ENCODE measurements at regions of chr5 and their contacts with region 1.

Region 1: GRCh38 chr5:69007726-69008368 is 86.0 kb upstream of the SLC30A5 start:
- DNase-seq: peak; percentile 65
- CTCF ChIP-seq: peak; percentile 97

Region 2: DNA sequence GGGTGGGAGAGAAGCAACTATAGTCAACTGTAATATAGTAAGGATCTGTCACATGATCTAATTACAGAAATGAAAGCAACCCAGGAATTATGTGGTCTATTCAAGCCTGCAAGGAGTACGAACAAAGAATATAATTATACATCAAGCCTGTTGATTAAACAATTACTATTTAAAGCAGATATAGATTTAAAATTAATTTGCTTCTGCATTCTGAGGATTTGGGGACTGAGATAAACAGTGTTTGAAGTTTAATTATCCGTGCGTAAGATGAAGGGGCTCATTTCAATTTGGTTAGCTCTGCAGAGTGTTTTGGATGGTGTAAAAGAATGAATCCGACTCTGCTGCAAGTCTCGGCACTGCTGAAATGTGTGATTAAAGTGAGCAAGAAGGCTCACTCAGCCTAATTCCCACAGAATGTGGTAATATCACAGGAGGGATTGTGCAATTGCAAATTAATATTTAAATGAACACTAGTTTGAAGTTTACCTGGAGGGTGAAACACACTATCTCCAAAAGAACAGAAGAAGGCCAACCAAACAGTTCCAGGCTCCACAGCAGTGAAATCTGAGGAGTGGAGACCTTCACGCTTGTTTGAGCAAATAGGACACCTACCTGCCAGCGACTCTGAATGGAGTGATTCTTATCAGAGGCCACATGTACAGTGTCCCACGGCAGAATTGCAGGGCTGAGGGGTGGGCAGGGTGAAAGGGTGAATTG is 334.6 kb before region 1 on chr5:
- CTCF ChIA-PET with region 1: no interaction called
- POLR2A ChIA-PET with region 1: no interaction called
- DNase-seq: no peak
- CTCF ChIP-seq: no peak

Region 3: DNA sequence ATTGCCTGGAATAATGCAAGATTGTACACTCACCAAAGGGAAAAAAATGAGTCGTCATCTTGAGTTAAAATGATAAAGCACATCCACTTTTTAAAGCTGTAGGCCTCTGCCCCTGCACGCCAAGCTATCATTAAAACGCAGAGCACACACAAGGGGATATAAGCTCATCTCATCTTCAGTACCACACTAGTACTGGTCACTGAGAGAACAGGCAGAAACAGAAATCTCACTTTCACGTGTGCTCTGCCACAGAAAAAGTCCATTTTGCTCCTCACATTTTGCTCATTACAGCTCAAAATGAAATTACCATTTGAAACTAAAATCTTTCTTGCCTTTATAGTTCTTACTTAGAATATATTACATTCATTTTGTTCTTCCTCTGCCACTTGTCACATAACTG is 13.2 kb before region 1 on chr5:
- CTCF ChIA-PET with region 1: interaction called, 16 read pairs
- POLR2A ChIA-PET with region 1: no interaction called
- DNase-seq: peak; percentile 18
- CTCF ChIP-seq: no peak

Region 4: GRCh38 chr5:69024241-69024651 is 16.4 kb after region 1 on chr5:
- CTCF ChIA-PET with region 1: interaction called, 25 read pairs
- POLR2A ChIA-PET with region 1: no interaction called
- DNase-seq: peak; percentile 48
- CTCF ChIP-seq: peak; percentile 62